Activated CD8-positive, alpha-beta memory T cell treated with anti-CD3 and anti-CD28 coated beads, Interleukin-2, amount 10 ng/mL, durations not matched to agents 7 days and 5 days (primary cell): ENCODE measurements at regions of chr10 and their contacts with region 1.

Region 1: DNA sequence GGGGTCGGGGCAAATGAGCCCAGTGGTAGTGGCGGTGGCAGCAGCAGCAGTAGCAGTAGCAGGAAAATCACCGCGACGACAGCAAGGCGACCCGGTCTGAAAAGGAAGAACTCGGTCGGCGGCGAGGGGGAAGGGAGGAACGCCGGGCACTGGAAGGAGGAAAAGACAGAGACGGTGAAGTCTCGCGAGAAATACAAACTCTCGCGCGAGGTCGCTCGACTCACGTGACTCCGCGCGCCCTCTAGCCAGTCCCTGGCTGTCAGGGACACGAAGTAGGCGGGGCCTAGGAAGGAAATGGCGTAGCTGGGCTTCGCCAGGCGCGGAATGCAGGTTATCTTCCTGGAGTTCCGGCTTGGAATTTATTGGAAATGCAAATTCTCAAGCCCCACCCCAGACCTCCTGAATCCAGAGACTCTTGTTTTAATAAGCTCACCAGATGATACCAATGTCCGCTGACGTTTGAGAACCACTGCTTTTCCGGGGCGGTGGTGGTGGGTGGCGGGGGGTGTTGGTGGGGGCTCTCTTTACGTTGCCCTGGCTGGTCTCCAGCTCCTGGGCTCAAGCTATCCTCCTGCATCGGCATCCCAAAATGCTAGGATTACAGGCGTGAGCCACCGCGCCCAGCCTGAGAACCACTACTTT is at the start of gene SMNDC1:
- DNase-seq: peak; percentile 98
- ATAC-seq: peak; percentile 92
- H3K4me3 Mint-ChIP-seq: peak within 1 kb of the TSS; percentile 97
- H3K27ac Mint-ChIP-seq: peak within 1 kb of the TSS; percentile 98
- H3K4me1 Mint-ChIP-seq: peaks cover 63% of the 10 kb centered on the region
- H3K27me3 Mint-ChIP-seq: no peaks in the 10 kb centered on the region
- total RNA-seq, gene SMNDC1: 40.9 to 43.5 TPM

Region 2: GRCh38 chr10:110497438-110498086 is 192.7 kb after region 1 on chr10 and contains the start of gene DUSP5:
- CTCF ChIA-PET with region 1: interaction called, 37 read pairs
- DNase-seq: peak; percentile 96
- ATAC-seq: peak; percentile 67
- H3K4me3 Mint-ChIP-seq: peak within 1 kb of the TSS; percentile 99
- H3K27ac Mint-ChIP-seq: peak within 1 kb of the TSS; percentile 97
- H3K4me1 Mint-ChIP-seq: peaks cover 52% of the 10 kb centered on the region
- H3K27me3 Mint-ChIP-seq: no peaks in the 10 kb centered on the region
- total RNA-seq, gene DUSP5: 102 to 223 TPM

Region 3: GRCh38 chr10:110540031-110540430 is 235.1 kb after region 1 on chr10:
- CTCF ChIA-PET with region 1: interaction called, 52 read pairs
- DNase-seq: no peak
- ATAC-seq: no peak
- H3K4me3 Mint-ChIP-seq: no peak overlapping the region
- H3K27ac Mint-ChIP-seq: peak overlapping the region; percentile 22
- H3K4me1 Mint-ChIP-seq: peaks cover 32% of the 10 kb centered on the region
- H3K27me3 Mint-ChIP-seq: no peaks in the 10 kb centered on the region

Region 4: DNA sequence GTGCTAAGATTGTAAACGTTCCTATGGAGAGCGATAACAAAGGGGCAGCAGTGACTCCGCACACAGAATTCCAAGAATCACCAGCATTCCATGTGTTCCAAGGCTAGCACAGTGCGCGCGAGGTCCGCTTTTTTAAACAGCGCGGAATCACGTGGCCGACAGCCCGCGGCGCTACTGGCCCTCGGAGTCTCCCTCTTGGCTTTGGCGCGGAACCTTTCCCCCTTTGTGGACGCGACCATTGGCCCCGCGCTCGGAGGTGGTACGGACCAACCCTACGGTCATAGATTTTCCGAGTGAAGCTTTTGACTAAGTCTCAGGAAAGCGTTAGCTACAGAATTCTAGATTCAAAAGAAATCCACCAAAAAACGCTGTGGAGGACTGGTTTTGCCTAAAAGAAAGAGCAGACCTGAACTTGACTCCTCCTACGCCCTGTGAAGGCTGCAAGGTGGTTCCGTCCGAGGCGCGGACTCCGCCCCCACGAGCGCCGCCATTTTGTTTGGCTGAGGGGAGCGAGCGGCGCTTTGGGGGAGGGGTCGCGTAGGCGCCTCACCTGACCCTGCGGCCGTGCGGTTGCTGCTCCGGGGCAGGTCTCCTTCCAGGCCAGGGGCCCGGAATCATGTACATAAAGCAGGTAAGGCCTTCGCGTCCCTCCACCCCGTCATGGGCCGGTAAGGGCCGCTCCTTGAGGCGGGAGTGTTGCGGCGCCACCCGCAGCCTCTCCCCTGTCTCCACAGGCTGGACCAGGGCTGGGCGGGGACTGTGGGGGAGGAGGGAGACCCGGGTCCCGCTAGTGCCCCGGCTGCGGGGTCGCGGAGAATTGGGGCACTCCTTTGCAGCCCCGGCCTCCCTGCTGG is 262.5 kb after region 1 on chr10 and contains the start of gene SMC3:
- CTCF ChIA-PET with region 1: interaction called, 35 read pairs
- DNase-seq: peak; percentile 94
- ATAC-seq: peak; percentile 84
- H3K4me3 Mint-ChIP-seq: peak within 1 kb of the TSS; percentile 94
- H3K27ac Mint-ChIP-seq: peak within 1 kb of the TSS; percentile 97
- H3K4me1 Mint-ChIP-seq: peaks cover 38% of the 10 kb centered on the region
- H3K27me3 Mint-ChIP-seq: peaks cover 16% of the 10 kb centered on the region
- total RNA-seq, gene SMC3: 81.3 to 86.8 TPM

Region 5: DNA sequence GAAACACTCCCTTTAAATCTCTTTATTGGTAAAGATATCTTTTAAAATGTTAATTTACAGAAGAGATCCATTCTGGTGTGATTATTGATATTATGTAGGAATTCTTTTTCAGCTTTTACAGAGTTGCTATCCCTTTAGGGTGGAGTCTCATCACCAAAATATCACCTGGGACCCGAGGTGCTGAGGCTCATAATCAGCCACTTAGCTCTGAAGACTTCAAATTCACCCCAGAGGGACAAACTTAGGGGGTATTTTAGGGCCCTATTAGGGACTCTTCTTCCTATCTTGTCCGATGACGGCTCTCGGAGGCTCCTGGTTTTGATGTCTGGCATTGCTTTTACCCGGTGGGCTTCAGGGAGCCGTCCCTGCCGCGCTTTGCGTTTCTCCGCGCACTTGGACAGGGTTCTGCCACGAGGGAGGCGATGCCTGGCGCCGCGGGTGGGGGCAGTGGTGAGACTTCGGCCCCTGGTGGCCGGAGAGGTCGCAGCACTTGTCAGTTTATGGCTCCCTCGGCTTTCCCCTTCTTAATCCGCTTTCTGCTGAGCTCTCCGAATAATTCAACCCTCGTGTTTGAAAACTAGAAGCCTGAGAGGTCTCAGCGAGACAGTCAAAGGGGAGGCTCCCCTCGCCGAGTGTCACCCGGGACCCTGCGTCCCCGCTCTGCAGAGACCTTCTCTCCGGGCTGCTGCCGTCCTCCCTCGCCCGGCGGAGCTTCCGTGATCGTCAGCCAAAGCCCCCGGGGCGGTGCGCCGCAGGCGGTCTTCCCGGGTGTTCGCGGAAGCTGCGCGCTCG is 367.1 kb after region 1 on chr10:
- CTCF ChIA-PET with region 1: interaction called, 13 read pairs
- DNase-seq: peak; percentile 85
- ATAC-seq: peak; percentile 98
- H3K4me3 Mint-ChIP-seq: peak overlapping the region; percentile 79
- H3K27ac Mint-ChIP-seq: peak overlapping the region; percentile 69
- H3K4me1 Mint-ChIP-seq: peaks cover 2% of the 10 kb centered on the region
- H3K27me3 Mint-ChIP-seq: peaks cover 50% of the 10 kb centered on the region